B cell (primary cell): ENCODE measurements at regions of chr3 and their contacts with region 1.

Region 1: GRCh38 chr3:72100601-72101187 is 315.7 kb upstream of the PROK2 start:
- DNase-seq: peak; percentile 97
- ATAC-seq: peak; percentile 60
- H3K4me3 ChIP-seq: peak overlapping the region; percentile 28 to 70 (median 49)
- H3K4me3 Mint-ChIP-seq: peak overlapping the region; percentile 62
- H3K27ac ChIP-seq: peak overlapping the region; percentile 70 to 78
- H3K27ac Mint-ChIP-seq: peak overlapping the region; percentile 85
- H3K4me1 ChIP-seq: peaks cover 60 to 69% of the 10 kb centered on the region in 2 donors
- H3K4me1 Mint-ChIP-seq: peaks cover 63% of the 10 kb centered on the region
- H3K27me3 ChIP-seq: peaks cover 0 to 12% (median 0%) of the 10 kb centered on the region in 4 experiments
- H3K27me3 Mint-ChIP-seq: peaks cover 9% of the 10 kb centered on the region
- CTCF ChIP-seq: no peak

Region 2: DNA sequence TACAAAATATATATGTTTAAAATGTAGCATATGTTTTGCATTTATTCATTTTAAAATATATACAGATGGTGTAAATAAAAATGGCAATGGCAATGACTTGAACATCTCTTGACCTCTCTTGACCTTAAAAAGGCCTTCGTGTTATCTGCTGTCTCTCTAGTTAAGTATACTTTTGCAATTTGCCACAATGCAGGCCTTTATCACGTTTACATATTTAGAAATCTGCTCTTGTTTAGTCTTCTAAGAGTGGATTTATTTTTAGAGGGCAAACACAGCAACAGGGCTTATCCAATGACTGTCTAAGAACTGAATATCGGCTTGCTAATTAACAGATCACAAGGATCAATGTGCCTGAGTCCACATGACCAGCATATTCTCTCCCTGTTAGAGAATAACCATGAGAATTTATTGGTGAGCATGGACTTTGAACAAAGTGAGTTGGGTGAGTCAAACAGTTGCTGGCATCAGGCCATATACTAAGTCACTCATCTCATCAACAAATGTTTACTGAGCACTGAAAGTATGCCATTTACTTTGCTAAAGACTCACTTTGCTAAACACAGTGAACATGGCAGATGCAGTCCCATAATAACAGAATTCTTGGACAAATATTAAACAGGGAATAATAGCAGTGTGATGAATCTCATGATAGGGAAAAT is 1836.4 kb before region 1 on chr3:
- CTCF ChIA-PET with region 1: no interaction called
- POLR2A ChIA-PET with region 1: no interaction called
- intact Hi-C with region 1: no loop called
- DNase-seq: no peak
- ATAC-seq: no peak
- H3K4me3 ChIP-seq: no peak overlapping the region
- H3K4me3 Mint-ChIP-seq: no peak overlapping the region
- H3K27ac ChIP-seq: no peak overlapping the region
- H3K27ac Mint-ChIP-seq: no peak overlapping the region
- H3K4me1 ChIP-seq: no peaks in the 10 kb centered on the region
- H3K4me1 Mint-ChIP-seq: no peaks in the 10 kb centered on the region
- H3K27me3 ChIP-seq: no peaks in the 10 kb centered on the region
- H3K27me3 Mint-ChIP-seq: no peaks in the 10 kb centered on the region
- CTCF ChIP-seq: no peak

Region 3: DNA sequence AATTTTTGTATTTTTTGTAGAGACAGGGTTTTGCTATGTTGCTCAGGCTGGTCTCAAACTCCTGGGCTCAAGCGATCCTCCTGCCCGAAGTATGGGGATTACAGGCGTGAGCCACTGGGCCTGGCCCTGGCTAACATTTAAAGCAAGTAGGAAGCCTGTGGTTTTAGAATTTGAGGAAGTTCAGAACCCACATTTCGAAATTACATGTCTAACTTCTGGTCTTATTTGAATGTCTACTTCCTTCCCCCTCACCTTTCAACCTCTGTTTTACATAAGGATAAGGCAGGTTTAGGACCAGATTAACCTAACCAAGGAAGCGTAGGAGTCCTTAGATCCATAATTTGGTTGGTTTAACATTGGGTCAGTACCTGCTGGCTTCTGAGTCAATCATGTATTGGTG is 195.3 kb before region 1 on chr3:
- CTCF ChIA-PET with region 1: no interaction called
- POLR2A ChIA-PET with region 1: no interaction called
- intact Hi-C with region 1: loop called (anchors 10 kb)
- DNase-seq: peak; percentile 79
- ATAC-seq: peak; percentile 87
- H3K4me3 ChIP-seq: peak overlapping the region in 1 of 5 experiments; percentile 14
- H3K4me3 Mint-ChIP-seq: peak overlapping the region; percentile 69
- H3K27ac ChIP-seq: no peak overlapping the region
- H3K27ac Mint-ChIP-seq: peak overlapping the region; percentile 51
- H3K4me1 ChIP-seq: peaks cover 40 to 43% of the 10 kb centered on the region in 2 donors
- H3K4me1 Mint-ChIP-seq: peaks cover 39% of the 10 kb centered on the region
- H3K27me3 ChIP-seq: peaks cover 0 to 84% (median 71%) of the 10 kb centered on the region in 4 experiments
- H3K27me3 Mint-ChIP-seq: peaks cover 82% of the 10 kb centered on the region
- CTCF ChIP-seq: no peak

Region 4: DNA sequence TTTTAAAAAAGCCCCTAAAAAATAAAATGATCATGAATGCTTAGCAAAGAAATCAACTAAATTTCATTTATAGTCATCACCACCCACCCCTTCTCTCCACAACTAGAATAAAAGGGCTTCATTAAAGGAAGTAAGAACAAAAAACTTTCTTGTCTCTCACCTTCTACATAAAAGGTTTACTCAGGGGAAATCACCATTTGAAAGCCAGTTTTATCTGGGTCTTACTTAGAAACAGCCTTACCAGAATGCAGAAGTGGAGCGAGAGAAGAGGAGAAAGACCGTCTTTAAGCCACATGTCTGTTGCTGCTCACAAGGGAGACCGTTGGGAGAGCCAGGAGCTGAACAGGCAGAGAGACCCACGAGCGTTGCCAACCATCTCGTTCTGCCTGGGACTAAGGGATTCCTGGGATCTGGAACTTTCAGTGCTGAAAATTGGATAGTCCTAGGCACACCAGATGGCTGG is 34.3 kb after region 1 on chr3:
- CTCF ChIA-PET with region 1: interaction called, 3 read pairs
- POLR2A ChIA-PET with region 1: no interaction called
- intact Hi-C with region 1: loop called (anchors 5 kb)
- DNase-seq: peak; percentile 73
- ATAC-seq: peak; percentile 79
- H3K4me3 ChIP-seq: no peak overlapping the region
- H3K4me3 Mint-ChIP-seq: peak overlapping the region; percentile 9
- H3K27ac ChIP-seq: no peak overlapping the region
- H3K27ac Mint-ChIP-seq: no peak overlapping the region
- H3K4me1 ChIP-seq: peaks cover 32 to 40% of the 10 kb centered on the region in 2 donors
- H3K4me1 Mint-ChIP-seq: peaks cover 40% of the 10 kb centered on the region
- H3K27me3 ChIP-seq: no peaks in the 10 kb centered on the region
- H3K27me3 Mint-ChIP-seq: peaks cover 12% of the 10 kb centered on the region
- CTCF ChIP-seq: no peak

Region 5: GRCh38 chr3:72177083-72178050 is 76.7 kb after region 1 on chr3:
- CTCF ChIA-PET with region 1: no interaction called
- POLR2A ChIA-PET with region 1: no interaction called
- intact Hi-C with region 1: loop called (anchors 5 kb)
- DNase-seq: peak; percentile 61
- ATAC-seq: peak; percentile 40
- H3K4me3 ChIP-seq: peak overlapping the region in 4 of 5 experiments; percentile 20 to 61 (median 36)
- H3K4me3 Mint-ChIP-seq: peak overlapping the region; percentile 88
- H3K27ac ChIP-seq: no peak overlapping the region
- H3K27ac Mint-ChIP-seq: peak overlapping the region; percentile 70
- H3K4me1 ChIP-seq: peaks cover 50 to 52% of the 10 kb centered on the region in 2 donors
- H3K4me1 Mint-ChIP-seq: peaks cover 65% of the 10 kb centered on the region
- H3K27me3 ChIP-seq: no peaks in the 10 kb centered on the region
- H3K27me3 Mint-ChIP-seq: peaks cover 13% of the 10 kb centered on the region
- CTCF ChIP-seq: no peak

Region 6: GRCh38 chr3:72523429-72524151 is 422.9 kb after region 1 on chr3:
- CTCF ChIA-PET with region 1: no interaction called
- POLR2A ChIA-PET with region 1: no interaction called
- intact Hi-C with region 1: loop called (anchors 5 kb)
- DNase-seq: peak; percentile 83
- ATAC-seq: peak; percentile 94
- H3K4me3 ChIP-seq: peak overlapping the region in 2 of 5 experiments; percentile 8 to 24
- H3K4me3 Mint-ChIP-seq: peak overlapping the region; percentile 75
- H3K27ac ChIP-seq: peak overlapping the region; percentile 37 to 49
- H3K27ac Mint-ChIP-seq: peak overlapping the region; percentile 89
- H3K4me1 ChIP-seq: peaks cover 29 to 34% of the 10 kb centered on the region in 2 donors
- H3K4me1 Mint-ChIP-seq: peaks cover 41% of the 10 kb centered on the region
- H3K27me3 ChIP-seq: no peaks in the 10 kb centered on the region
- H3K27me3 Mint-ChIP-seq: no peaks in the 10 kb centered on the region
- CTCF ChIP-seq: no peak